PC-3 (cell line): ENCODE measurements at regions of chr3 and their contacts with region 1.

Region 1: DNA sequence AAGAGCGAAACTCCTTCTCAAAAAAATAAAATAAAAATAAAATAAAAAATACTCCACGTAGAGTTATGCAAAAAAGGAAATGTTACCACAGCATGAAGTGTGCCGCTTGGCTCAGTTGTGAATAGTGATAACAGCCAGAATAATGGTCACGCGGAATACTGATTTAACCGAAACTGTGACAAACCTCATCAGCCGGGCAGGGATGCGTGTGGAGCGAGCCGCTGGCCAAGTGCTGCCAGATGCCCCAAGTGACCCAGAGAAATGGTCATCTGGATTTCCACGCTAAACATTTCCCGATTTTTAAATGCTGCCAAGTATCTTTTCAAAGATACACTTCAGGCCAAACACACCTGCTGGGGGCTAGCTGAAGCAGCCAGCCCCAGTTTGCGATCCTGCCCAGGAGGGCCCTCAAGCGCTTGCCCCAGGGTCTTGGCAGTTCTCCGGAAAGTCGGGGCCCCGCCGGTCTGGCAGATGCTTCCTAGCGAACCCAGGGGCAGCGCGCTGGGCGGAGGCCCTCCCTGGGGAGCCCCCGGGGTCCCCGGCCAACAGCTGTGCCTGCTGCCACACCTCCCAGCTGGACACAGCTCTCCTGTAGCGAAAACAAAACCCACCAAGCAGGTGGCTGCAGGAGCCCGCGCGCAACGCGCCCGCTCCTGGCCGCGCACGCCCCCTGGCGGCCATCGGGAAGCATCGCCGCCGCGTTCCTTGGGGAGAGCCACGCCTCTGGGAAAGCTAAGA is 35.1 kb downstream of the CMTM6 start:
- DNase-seq: peak; percentile 87
- ATAC-seq: peak; percentile 54
- H3K4me3 ChIP-seq: no peak overlapping the region
- H3K27ac ChIP-seq: no peak overlapping the region
- H3K4me1 ChIP-seq: peaks cover 33% of the 10 kb centered on the region
- H3K27me3 ChIP-seq: no peaks in the 10 kb centered on the region
- CTCF ChIP-seq: peak; percentile 96

Region 2: GRCh38 chr3:32177702-32178198 is 289.8 kb before region 1 on chr3:
- CTCF ChIA-PET with region 1: interaction called, 3 read pairs
- POLR2A ChIA-PET with region 1: no interaction called
- intact Hi-C with region 1: loop called (anchors 2 kb)
- DNase-seq: peak; percentile 97
- ATAC-seq: peak; percentile 91
- H3K4me3 ChIP-seq: peak overlapping the region; percentile 53
- H3K27ac ChIP-seq: no peak overlapping the region
- H3K4me1 ChIP-seq: peaks cover 9% of the 10 kb centered on the region; the same call in 1 of the 2 replicates
- H3K27me3 ChIP-seq: no peaks in the 10 kb centered on the region
- CTCF ChIP-seq: peak; percentile 93

Region 3: GRCh38 chr3:32374788-32375595 is 92.5 kb before region 1 on chr3:
- CTCF ChIA-PET with region 1: interaction called, 7 read pairs
- POLR2A ChIA-PET with region 1: no interaction called
- intact Hi-C with region 1: loop called (anchors 1 kb)
- DNase-seq: peak; percentile 92
- ATAC-seq: peak; percentile 74
- H3K4me3 ChIP-seq: no peak overlapping the region
- H3K27ac ChIP-seq: no peak overlapping the region
- H3K4me1 ChIP-seq: no peaks in the 10 kb centered on the region
- H3K27me3 ChIP-seq: no peaks in the 10 kb centered on the region
- CTCF ChIP-seq: peak; percentile 85

Region 4: GRCh38 chr3:32421991-32422859 is 45.3 kb before region 1 on chr3:
- CTCF ChIA-PET with region 1: interaction called, 4 read pairs
- POLR2A ChIA-PET with region 1: no interaction called
- intact Hi-C with region 1: loop called (anchors 1 kb)
- DNase-seq: peak; percentile 98
- ATAC-seq: peak; percentile 53
- H3K4me3 ChIP-seq: peak overlapping the region; percentile 53; the same call in 1 of the 2 replicates
- H3K27ac ChIP-seq: peak overlapping the region; percentile 99
- H3K4me1 ChIP-seq: peaks cover 62% of the 10 kb centered on the region
- H3K27me3 ChIP-seq: no peaks in the 10 kb centered on the region
- CTCF ChIP-seq: no peak

Region 5: GRCh38 chr3:32667122-32667521 is 199.6 kb after region 1 on chr3:
- CTCF ChIA-PET with region 1: no interaction called
- POLR2A ChIA-PET with region 1: no interaction called
- intact Hi-C with region 1: loop called (anchors 1 kb)
- DNase-seq: peak; percentile 45
- ATAC-seq: peak; percentile 27
- H3K4me3 ChIP-seq: no peak overlapping the region
- H3K27ac ChIP-seq: no peak overlapping the region
- H3K4me1 ChIP-seq: peaks cover 6% of the 10 kb centered on the region; the same call in 1 of the 2 replicates
- H3K27me3 ChIP-seq: no peaks in the 10 kb centered on the region
- CTCF ChIP-seq: no peak